ENCODE measurements at regions of chr3 and their contacts with region 1.

Region 1: DNA sequence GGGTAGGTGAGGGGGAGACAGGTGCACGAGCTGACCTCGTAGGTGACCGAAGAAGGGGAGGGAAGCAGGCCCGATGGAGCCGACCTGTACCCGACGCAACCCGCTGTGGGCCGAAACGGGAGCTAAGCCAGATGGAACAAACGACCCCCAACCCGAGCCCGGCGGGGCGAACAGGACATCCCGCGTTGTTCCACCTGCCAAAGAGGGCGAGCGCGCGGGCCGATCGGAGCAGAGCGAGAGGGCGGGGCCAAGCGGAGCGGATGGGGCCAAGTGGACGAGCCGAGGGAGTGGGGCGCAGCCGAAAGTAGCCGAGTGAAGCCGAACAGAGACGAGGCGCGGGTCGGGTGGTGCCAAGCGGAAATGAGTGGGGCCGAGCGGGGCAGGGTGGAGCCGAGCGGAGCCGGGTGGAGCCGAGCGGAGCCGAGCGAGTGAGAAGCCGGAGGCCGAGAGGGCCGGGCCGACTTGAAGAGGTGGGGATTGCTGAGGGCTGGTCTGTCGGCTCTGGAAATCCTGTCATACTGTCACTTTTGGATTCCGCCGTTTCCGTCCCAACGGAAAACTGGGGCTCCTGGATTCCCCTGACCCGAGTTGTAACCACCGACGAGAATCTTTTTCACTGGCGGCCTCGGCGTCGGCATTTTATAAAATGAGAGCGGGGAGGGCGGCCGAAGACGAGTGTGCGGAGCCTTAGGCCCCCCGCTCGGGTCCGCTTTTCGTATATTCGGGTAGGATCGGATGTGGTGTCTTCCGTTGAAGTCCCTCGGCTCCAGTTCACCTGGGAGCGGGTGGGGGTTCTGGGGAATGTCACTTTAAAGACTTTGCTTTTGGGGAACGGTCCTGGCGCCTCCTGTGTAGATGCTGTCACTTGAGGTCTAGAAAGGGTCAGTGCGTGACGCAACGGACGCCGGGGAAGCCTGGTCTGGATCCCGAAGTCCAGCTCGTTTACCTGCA is 15.6 kb upstream of the WNT7A start:
- DNase-seq: peak; percentile 97
- ATAC-seq: peak; percentile 99 to 100

Region 2: GRCh38 chr3:13950042-13950441 is 54.6 kb after region 1 on chr3:
- intact Hi-C with region 1: no loop called
- DNase-seq: no peak
- ATAC-seq: no peak

Region 3: DNA sequence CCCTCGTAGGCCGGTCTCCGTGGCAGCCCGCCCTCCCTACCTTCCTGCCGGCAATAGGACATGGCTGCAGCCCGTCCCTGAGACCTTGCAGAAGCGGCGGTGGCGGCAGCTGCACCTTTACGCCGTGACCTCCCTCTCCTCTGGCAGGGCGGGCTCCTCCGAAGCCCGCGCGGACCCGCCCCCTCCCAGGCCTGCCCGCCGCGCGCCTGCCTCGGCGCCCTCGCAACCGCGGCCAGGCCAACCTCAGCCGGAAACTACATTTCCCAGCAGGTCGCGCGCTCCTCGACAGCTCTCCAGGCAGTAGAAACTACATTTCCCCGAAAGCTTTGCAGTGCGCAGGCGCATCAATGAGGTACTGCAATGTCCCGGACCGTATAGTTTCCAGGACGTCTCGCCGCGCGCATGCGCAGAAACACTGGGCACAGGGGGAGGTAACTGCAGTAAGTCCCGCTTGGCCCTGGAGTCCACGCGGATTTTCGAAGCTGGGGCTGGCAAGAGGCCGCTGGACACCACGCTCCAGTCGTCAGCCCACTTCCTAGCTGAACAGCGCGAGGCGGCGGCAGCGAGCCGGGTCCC is 229.3 kb after region 1 on chr3 and contains the starts of genes CHCHD4 and TMEM43:
- intact Hi-C with region 1: loop called in 1 of 2 experiments (anchors 10 kb)
- DNase-seq: peak; percentile 100
- ATAC-seq: peak; percentile 92 to 93
- total RNA-seq, gene CHCHD4: 21.8 to 25.9 TPM
- total RNA-seq, gene TMEM43: 50.1 to 95.3 TPM

Region 4: GRCh38 chr3:14467814-14468620 is 572.6 kb after region 1 on chr3:
- intact Hi-C with region 1: loop called in 1 of 2 experiments (anchors 10 kb)
- DNase-seq: no peak
- ATAC-seq: peak; percentile 46 to 58